ENCODE measurements at regions of chr2 and their contacts with region 1.

Region 1: GRCh38 chr2:209334198-209335017 is 89.4 kb upstream of the MAP2 start:
- DNase-seq: peak; percentile 61 to 78
- H3K4me3 ChIP-seq: no peak overlapping the region
- H3K27ac ChIP-seq: no peak overlapping the region
- H3K4me1 ChIP-seq: no peaks in the 10 kb centered on the region
- H3K27me3 ChIP-seq: no peaks in the 10 kb centered on the region
- CTCF ChIP-seq: peak; percentile 72 to 93 (median 85)
- POLR2A ChIP-seq: no peak

Region 2: DNA sequence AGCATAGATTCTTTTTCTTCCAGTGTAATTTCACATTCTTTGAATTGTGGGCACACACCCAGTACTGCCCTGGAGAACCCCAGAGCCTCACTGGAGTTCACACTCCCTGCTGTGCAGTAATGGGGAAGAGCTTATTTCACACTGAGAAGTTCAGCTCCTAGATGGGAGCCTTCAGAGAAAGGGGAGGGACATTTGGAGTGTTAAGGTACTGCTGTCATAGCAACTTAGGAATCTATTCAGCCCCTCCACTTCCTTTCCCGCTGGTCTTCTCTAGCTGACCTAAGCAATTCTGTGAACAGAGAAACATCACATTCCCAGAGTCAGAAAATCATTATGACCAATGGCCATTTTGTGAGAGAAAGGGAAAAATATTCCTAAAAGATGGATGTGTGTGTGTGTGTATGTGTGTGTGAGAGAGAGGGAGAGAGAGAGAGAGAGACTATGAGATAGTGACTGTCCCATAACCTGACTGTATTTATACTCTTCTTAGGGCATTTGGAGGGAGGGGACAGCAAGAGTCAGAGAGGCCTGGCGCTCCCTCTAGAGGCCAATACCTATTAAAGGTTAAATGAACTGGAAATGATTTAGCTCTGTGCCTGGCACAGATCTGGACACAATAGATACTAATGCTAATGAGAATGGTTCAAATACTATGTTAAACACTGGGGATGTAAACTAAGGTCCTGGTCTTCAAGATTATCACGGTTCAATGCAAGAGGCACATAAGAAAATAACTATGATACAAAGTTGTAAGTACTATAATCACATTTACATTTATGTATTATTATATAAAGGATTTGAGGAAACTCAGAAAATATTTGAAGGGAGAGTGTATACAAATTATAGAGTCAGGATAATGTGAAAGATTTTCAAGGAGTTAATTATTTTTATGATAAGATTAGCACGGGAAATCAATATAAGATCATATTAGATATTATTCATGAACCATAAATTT is 626.5 kb after region 1 on chr2:
- intact Hi-C with region 1: loop called (anchors 5 kb)
- DNase-seq: peak; percentile 40 to 55
- H3K4me3 ChIP-seq: no peak overlapping the region
- H3K27ac ChIP-seq: peak overlapping the region in 1 of 3 donors; percentile 30
- H3K4me1 ChIP-seq: peaks cover 7 to 9% of the 10 kb centered on the region in 2 donors
- H3K27me3 ChIP-seq: no peaks in the 10 kb centered on the region
- CTCF ChIP-seq: peak in 5 of 6 experiments; percentile 47 to 68 (median 64)
- POLR2A ChIP-seq: no peak

Measured in thyroid gland (tissue), 4 donors.